Activated naive CD4-positive, alpha-beta T cell treated with anti-CD3 and anti-CD28 coated beads, Interleukin-2, amount 10 ng/mL, durations not matched to agents 7 days and 5 days (primary cell): ENCODE measurements at regions of chr22 and their contacts with region 1.

Region 1: GRCh38 chr22:38097557-38098409 is 12.7 kb downstream of the BAIAP2L2 start:
- DNase-seq: no peak
- H3K4me3 Mint-ChIP-seq: no peak overlapping the region
- H3K27ac Mint-ChIP-seq: no peak overlapping the region
- H3K4me1 Mint-ChIP-seq: no peaks in the 10 kb centered on the region
- H3K27me3 Mint-ChIP-seq: no peaks in the 10 kb centered on the region

Region 2: DNA sequence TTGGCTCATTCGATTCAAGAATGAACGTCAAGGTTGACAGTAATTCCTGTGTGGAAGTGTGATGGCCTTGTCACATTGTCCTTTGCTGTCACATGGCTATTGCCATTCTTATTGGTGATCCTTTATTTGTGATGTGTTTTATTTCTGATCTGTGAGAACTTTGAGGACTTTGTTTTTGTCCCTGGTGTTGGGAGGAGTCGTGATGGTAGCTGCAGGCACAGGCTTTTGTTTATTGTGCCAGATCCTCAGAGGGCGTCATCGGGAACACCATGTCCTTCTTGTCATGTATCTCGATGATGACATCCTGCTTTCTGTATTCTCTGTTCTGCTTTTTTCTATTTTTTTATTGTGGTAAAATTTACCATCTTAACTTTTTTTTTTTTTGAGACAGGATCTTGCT is 35.0 kb before region 1 on chr22:
- CTCF ChIA-PET with region 1: no interaction called
- DNase-seq: no peak
- H3K4me3 Mint-ChIP-seq: no peak overlapping the region
- H3K27ac Mint-ChIP-seq: peak overlapping the region; percentile 6
- H3K4me1 Mint-ChIP-seq: peaks cover 6% of the 10 kb centered on the region
- H3K27me3 Mint-ChIP-seq: no peaks in the 10 kb centered on the region

Region 3: GRCh38 chr22:38080850-38081635 is 16.7 kb before region 1 on chr22:
- CTCF ChIA-PET with region 1: no interaction called
- DNase-seq: peak; percentile 29
- H3K4me3 Mint-ChIP-seq: no peak overlapping the region
- H3K27ac Mint-ChIP-seq: no peak overlapping the region
- H3K4me1 Mint-ChIP-seq: no peaks in the 10 kb centered on the region
- H3K27me3 Mint-ChIP-seq: peaks cover 70% of the 10 kb centered on the region

Region 4: GRCh38 chr22:38135133-38135751 is 37.5 kb after region 1 on chr22:
- CTCF ChIA-PET with region 1: no interaction called
- DNase-seq: no peak
- H3K4me3 Mint-ChIP-seq: no peak overlapping the region
- H3K27ac Mint-ChIP-seq: no peak overlapping the region
- H3K4me1 Mint-ChIP-seq: no peaks in the 10 kb centered on the region
- H3K27me3 Mint-ChIP-seq: no peaks in the 10 kb centered on the region

Region 5: DNA sequence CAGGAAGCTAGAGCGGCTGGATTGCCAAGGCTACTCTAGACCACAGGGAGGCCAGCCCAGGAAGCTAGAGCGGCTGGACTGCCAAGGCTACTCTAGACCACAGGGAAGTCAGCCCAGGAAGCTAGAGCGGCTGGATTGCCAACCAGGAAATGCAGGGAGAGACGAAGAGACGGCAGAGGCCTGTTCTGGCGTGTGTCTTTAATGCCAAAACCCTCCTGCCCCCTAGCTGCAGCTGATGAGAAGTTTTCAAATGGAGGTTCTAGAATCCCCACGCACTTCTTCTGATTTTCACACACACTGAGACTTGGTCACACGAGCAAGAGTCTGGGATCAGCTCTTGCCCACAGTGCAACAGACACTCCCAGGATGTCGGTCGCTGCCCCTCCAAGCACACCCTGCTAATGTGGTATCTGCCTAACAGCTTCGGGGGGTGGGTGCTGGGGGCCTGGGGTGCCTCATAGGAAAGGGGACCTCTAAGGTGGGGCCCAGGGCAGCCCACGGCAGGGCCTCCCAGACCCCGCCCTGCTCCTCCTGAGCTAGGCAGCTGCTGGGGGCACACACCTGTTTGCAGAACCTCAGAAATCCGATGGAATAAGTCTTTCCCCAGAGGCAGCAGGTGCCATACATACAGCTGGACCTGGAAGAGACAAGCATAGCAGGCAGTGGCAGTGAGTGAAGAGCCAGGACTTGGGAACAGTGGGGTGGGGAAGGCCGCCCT is 132.5 kb after region 1 on chr22:
- CTCF ChIA-PET with region 1: interaction called, 14 read pairs
- DNase-seq: peak; percentile 63
- H3K4me3 Mint-ChIP-seq: no peak overlapping the region
- H3K27ac Mint-ChIP-seq: no peak overlapping the region
- H3K4me1 Mint-ChIP-seq: peaks cover 12% of the 10 kb centered on the region
- H3K27me3 Mint-ChIP-seq: no peaks in the 10 kb centered on the region

Region 6: DNA sequence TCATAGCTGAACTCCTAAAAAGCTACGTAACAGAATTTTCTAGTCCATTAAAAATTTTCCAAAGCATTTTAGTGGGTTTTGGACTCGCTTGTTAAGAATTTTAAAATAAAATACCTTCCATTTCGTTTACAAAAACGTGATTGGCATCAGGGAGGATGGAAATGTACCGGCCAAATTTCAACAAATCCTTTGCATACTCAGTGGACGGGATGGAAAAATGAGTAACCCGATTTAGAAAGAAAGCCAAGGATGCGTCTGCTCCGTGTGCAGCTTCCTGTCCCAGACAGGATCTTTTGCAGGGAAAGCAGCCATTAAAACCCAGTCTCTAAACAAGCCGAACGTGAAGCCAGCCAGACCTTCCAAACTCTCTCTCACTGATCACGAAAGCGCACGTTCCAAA is 159.4 kb after region 1 on chr22:
- CTCF ChIA-PET with region 1: no interaction called
- DNase-seq: no peak
- H3K4me3 Mint-ChIP-seq: no peak overlapping the region
- H3K27ac Mint-ChIP-seq: no peak overlapping the region
- H3K4me1 Mint-ChIP-seq: peaks cover 2% of the 10 kb centered on the region
- H3K27me3 Mint-ChIP-seq: no peaks in the 10 kb centered on the region